Activated naive CD4-positive, alpha-beta T cell treated with anti-CD3 and anti-CD28 coated beads for 36 hours (primary cell): ENCODE measurements at regions of chr3 and their contacts with region 1.

Region 1: DNA sequence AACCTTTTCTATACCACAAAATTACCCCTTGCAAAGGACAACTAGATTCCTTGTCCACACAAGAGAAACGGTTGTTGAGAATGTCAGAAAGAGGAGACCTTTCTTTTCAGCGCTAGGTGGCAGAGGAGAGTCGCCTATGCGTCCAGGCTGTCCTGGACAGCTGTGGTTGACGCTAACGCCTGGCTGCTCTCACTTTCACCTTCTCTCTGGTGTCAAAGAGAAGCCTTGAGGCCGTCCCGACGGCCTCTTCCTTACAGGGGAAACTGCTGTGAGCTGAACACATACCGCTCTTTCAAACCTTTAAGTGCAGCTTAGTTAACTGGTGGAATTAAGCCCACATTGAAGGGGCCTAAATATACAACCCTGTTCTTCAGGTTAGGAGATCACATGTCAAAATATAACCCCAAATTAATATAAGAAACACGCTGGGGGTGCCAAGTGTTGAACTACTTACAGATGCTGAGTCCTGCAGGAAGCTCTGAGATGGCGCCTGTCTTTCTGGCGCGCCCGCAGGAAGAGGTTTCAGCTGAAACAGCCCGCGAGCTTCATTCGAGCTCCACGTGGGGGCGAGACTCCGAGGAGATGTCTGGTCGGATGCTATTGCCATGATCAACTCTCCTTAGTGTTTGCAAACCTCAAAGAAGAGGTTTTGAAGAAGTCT is 26.1 kb upstream of the KBTBD8 start:
- DNase-seq: peak; percentile 81
- H3K4me3 Mint-ChIP-seq: peak overlapping the region; percentile 68
- H3K27ac Mint-ChIP-seq: peak overlapping the region; percentile 50
- H3K4me1 Mint-ChIP-seq: peaks cover 7% of the 10 kb centered on the region
- H3K27me3 Mint-ChIP-seq: no peaks in the 10 kb centered on the region

Region 2: DNA sequence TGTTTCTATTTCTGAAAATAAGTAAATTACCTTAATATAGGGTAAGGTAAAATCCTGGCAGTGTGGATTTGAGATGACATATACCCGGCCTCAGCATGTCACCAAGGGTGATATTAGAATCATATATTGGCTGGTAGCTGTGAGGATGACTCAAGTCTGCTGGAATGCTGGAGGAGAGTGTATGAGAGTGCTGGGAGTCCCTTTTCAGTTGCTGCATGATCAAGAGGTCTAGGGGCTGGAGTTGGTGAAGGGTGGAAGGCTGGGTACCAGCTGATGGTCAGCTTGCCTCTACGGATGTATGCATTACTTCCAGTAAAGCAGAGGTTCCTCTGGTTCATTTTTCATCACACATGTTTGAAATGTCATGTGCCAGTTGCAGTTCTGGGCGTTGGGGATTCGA is 710.7 kb before region 1 on chr3:
- CTCF ChIA-PET with region 1: no interaction called
- intact Hi-C with region 1: no loop called
- DNase-seq: no peak
- H3K4me3 Mint-ChIP-seq: no peak overlapping the region
- H3K27ac Mint-ChIP-seq: no peak overlapping the region
- H3K4me1 Mint-ChIP-seq: no peaks in the 10 kb centered on the region
- H3K27me3 Mint-ChIP-seq: no peaks in the 10 kb centered on the region

Region 3: GRCh38 chr3:66938338-66938963 is 33.6 kb before region 1 on chr3:
- CTCF ChIA-PET with region 1: interaction called, 10 read pairs
- intact Hi-C with region 1: loop called (anchors 2 kb)
- DNase-seq: peak; percentile 48
- H3K4me3 Mint-ChIP-seq: no peak overlapping the region
- H3K27ac Mint-ChIP-seq: no peak overlapping the region
- H3K4me1 Mint-ChIP-seq: no peaks in the 10 kb centered on the region
- H3K27me3 Mint-ChIP-seq: peaks cover 7% of the 10 kb centered on the region

Region 4: DNA sequence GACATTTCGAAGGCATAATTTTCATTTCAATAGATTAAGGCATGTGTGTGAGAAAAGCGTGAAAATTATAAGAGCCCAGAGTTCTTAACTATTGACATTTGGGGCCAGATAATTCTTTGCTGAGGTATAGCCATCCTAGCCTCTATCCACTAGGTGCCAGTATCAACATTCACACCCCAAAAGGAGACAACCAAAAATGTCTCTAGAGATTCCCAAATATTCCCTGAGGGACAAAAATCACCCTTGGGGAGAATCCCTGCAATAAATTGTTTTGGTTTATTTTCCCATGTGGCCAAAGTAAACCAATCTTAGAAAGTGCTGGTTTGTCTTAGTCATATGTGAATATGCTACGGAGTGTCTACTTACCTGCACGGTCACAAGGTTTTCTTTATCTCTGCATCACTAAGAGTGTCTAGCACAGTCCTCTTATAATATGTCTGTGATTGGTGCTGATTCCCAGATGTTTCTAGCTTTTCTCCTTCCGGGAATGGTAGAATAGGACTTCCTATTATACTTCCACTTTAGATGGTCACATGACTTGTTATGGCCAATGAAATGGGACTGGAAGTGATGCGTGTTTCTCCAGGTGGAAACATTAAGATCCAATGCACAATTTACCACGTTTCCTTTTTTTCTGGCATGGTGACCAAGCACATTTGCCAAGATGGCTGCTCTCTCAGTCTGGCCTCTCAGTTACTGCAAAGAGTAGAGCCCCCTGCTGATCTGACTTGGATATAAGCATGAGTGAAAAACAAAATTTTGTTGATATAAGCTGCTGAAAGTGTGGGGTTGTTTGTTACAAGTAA is 18.0 kb after region 1 on chr3:
- CTCF ChIA-PET with region 1: interaction called, 56 read pairs
- intact Hi-C with region 1: no loop called
- DNase-seq: no peak
- H3K4me3 Mint-ChIP-seq: no peak overlapping the region
- H3K27ac Mint-ChIP-seq: no peak overlapping the region
- H3K4me1 Mint-ChIP-seq: no peaks in the 10 kb centered on the region
- H3K27me3 Mint-ChIP-seq: peaks cover 2% of the 10 kb centered on the region

Region 5: GRCh38 chr3:67006460-67006859 is 34.4 kb after region 1 on chr3:
- CTCF ChIA-PET with region 1: interaction called, 14 read pairs
- intact Hi-C with region 1: no loop called
- DNase-seq: no peak
- H3K4me3 Mint-ChIP-seq: no peak overlapping the region
- H3K27ac Mint-ChIP-seq: no peak overlapping the region
- H3K4me1 Mint-ChIP-seq: peaks cover 35% of the 10 kb centered on the region
- H3K27me3 Mint-ChIP-seq: no peaks in the 10 kb centered on the region

Region 6: GRCh38 chr3:67044955-67045354 is 72.9 kb after region 1 on chr3:
- CTCF ChIA-PET with region 1: interaction called, 11 read pairs
- intact Hi-C with region 1: no loop called
- DNase-seq: no peak
- H3K4me3 Mint-ChIP-seq: no peak overlapping the region
- H3K27ac Mint-ChIP-seq: no peak overlapping the region
- H3K4me1 Mint-ChIP-seq: no peaks in the 10 kb centered on the region
- H3K27me3 Mint-ChIP-seq: no peaks in the 10 kb centered on the region

Region 7: GRCh38 chr3:67245545-67245944 is 273.5 kb after region 1 on chr3:
- CTCF ChIA-PET with region 1: interaction called, 10 read pairs
- intact Hi-C with region 1: no loop called
- DNase-seq: no peak
- H3K4me3 Mint-ChIP-seq: no peak overlapping the region
- H3K27ac Mint-ChIP-seq: no peak overlapping the region
- H3K4me1 Mint-ChIP-seq: no peaks in the 10 kb centered on the region
- H3K27me3 Mint-ChIP-seq: no peaks in the 10 kb centered on the region

Region 8: GRCh38 chr3:67790043-67790442 is 818.0 kb after region 1 on chr3:
- CTCF ChIA-PET with region 1: no interaction called
- intact Hi-C with region 1: loop called (anchors 5 kb)
- DNase-seq: peak; percentile 81
- H3K4me3 Mint-ChIP-seq: no peak overlapping the region
- H3K27ac Mint-ChIP-seq: no peak overlapping the region
- H3K4me1 Mint-ChIP-seq: peaks cover 14% of the 10 kb centered on the region
- H3K27me3 Mint-ChIP-seq: no peaks in the 10 kb centered on the region